HAP-1 (cell line): ENCODE measurements at regions of chr12 and their contacts with region 1.

Region 1: DNA sequence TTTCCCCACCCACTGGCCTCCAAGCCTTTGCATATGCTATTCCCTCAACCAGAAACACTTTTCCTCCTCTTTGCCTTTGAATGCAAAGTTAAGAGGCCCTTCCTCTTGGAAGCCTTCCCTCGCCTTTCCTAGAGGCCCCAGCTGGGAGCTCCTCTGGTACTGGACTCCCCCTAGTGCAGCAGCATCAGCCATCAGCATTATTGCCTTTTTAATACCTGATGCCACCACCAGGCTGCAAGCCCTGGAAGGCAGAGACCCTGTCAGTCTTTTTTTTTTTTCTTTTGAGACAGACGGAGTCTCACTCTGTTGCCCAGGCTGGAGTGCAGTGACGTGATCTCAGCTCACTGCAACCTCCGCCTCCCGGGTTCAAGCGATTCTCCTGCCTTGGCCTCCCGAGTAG is 19.1 kb upstream of the PLA2G1B start:
- DNase-seq: no peak
- H3K4me3 ChIP-seq: no peak overlapping the region
- H3K4me1 ChIP-seq: no peaks in the 10 kb centered on the region
- H3K27me3 ChIP-seq: no peaks in the 10 kb centered on the region

Region 2: GRCh38 chr12:121110211-121110940 is 763.7 kb after region 1 on chr12:
- in situ Hi-C with region 1: loop called (anchors 25 kb)
- DNase-seq: peak; percentile 69 to 72
- H3K4me3 ChIP-seq: no peak overlapping the region
- H3K4me1 ChIP-seq: no peaks in the 10 kb centered on the region
- H3K27me3 ChIP-seq: no peaks in the 10 kb centered on the region